ENCODE measurements at regions of chr2 and their contacts with region 1.

Region 1: GRCh38 chr2:233223059-233223894 is 28.2 kb upstream of the ATG16L1 start:
- DNase-seq: peak; percentile 75
- ATAC-seq: peak; percentile 95
- H3K4me3 ChIP-seq: no peak overlapping the region
- H3K27ac ChIP-seq: peak overlapping the region; percentile 66
- H3K4me1 ChIP-seq: peaks cover 28% of the 10 kb centered on the region
- H3K27me3 ChIP-seq: no peaks in the 10 kb centered on the region
- CTCF ChIP-seq: no peak
- EP300 ChIP-seq: peak; percentile 62 to 87; a peak in 3 of 4 replicates
- POLR2A ChIP-seq: no peak
- RAD21 ChIP-seq: no peak

Region 2: DNA sequence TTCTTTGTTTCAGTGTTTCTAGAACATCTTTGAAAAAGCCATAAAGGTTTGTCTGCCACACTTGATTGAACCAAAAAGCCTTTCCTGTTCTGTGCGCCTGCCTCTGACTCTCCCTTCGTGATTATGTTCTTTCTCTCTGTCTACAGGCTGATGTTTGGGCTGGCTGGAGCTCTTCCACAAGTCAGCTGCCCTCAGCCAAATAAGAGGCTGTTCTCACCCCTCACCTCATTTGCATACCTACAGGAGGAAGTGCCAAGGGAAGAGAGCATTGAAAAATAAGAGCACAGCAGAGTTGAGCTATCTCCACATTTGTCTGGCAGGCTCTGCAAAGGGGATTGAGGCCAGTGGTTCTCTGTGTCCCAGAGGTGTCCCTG is 147.3 kb before region 1 on chr2:
- CTCF ChIA-PET with region 1: no interaction called
- POLR2A ChIA-PET with region 1: no interaction called
- RAD21 ChIA-PET with region 1: interaction called, 10 read pairs
- SMC1A ChIA-PET with region 1: interaction called, 5 read pairs
- in situ Hi-C with region 1: no loop called
- intact Hi-C with region 1: no loop called
- DNase-seq: peak; percentile 82
- ATAC-seq: peak; percentile 68
- H3K4me3 ChIP-seq: peak overlapping the region; percentile 30; the same call in 1 of the 2 replicates
- H3K27ac ChIP-seq: peak overlapping the region; percentile 89
- H3K4me1 ChIP-seq: peaks cover 87% of the 10 kb centered on the region
- H3K27me3 ChIP-seq: no peaks in the 10 kb centered on the region
- CTCF ChIP-seq: no peak
- EP300 ChIP-seq: 0 out of 4 replicates have a peak, but pooled peaks of 1 of the 2 experiments have one; percentile 33
- POLR2A ChIP-seq: 0 out of 2 replicates have a peak, but pooled peaks have one; percentile 17
- RAD21 ChIP-seq: no peak

Region 3: GRCh38 chr2:233185963-233186362 is 37.3 kb before region 1 on chr2:
- CTCF ChIA-PET with region 1: interaction called, 3 read pairs
- POLR2A ChIA-PET with region 1: interaction called, 3 read pairs
- RAD21 ChIA-PET with region 1: interaction called, 9 read pairs
- SMC1A ChIA-PET with region 1: interaction called, 18 read pairs
- in situ Hi-C with region 1: no loop called
- intact Hi-C with region 1: no loop called
- DNase-seq: peak; percentile 50
- ATAC-seq: peak; percentile 70
- H3K4me3 ChIP-seq: no peak overlapping the region
- H3K27ac ChIP-seq: peak overlapping the region; percentile 35
- H3K4me1 ChIP-seq: peaks cover 21% of the 10 kb centered on the region
- H3K27me3 ChIP-seq: no peaks in the 10 kb centered on the region
- CTCF ChIP-seq: no peak
- EP300 ChIP-seq: peak in 1 of 2 experiments; percentile 47; a peak in 1 of 4 replicates
- POLR2A ChIP-seq: no peak
- RAD21 ChIP-seq: no peak

Region 4: DNA sequence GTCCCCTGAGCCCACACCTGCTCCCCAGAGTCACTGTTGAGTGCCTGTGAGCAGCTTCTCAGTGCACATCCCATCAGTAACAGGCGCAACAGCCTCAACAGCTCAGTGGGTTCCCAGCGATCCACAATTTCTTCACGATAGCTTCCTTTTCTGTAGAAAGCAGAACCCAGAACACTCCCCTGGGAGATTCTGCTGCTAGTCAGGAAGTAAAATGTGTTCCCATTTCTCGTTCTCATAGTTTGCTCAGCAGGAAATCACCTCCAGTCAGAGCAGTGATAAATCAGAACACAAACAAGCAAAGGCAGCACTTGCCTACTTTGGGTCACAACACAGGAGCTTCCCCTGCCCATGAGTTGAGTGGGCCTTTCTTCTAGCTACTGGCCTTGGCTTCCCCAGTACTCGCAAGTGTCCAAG is 20.7 kb before region 1 on chr2:
- CTCF ChIA-PET with region 1: interaction called, 9 read pairs
- POLR2A ChIA-PET with region 1: interaction called, 16 read pairs
- RAD21 ChIA-PET with region 1: interaction called, 17 read pairs
- SMC1A ChIA-PET with region 1: interaction called, 25 read pairs
- in situ Hi-C with region 1: no loop called
- intact Hi-C with region 1: loop called (anchors 2 kb)
- DNase-seq: peak; percentile 64
- ATAC-seq: peak; percentile 45
- H3K4me3 ChIP-seq: no peak overlapping the region
- H3K27ac ChIP-seq: peak overlapping the region; percentile 78
- H3K4me1 ChIP-seq: peaks cover 28% of the 10 kb centered on the region
- H3K27me3 ChIP-seq: no peaks in the 10 kb centered on the region
- CTCF ChIP-seq: no peak
- EP300 ChIP-seq: no peak
- POLR2A ChIP-seq: no peak; the same call in 1 of the 2 replicates
- RAD21 ChIP-seq: no peak

Region 5: DNA sequence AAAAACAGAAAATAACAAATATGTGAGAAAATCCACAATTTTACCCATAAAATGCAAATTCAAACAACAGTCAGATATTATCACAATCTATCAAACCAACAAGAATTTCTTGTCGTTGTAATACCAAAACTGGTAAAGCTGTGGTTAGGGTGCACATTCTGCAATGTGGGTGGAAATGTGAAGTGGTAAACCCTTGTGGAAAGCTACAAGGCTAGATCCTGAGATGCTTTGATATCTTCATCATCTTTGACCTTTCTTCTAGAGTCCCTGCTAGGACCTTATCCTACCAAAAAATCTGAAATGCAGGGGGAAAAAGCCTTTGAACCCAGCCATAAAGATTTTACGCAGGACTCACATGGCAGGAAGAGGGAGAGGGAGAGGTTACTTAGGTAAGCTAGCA is 11.0 kb after region 1 on chr2:
- CTCF ChIA-PET with region 1: interaction called, 3 read pairs
- POLR2A ChIA-PET with region 1: interaction called, 6 read pairs
- RAD21 ChIA-PET with region 1: interaction called, 11 read pairs
- SMC1A ChIA-PET with region 1: interaction called, 34 read pairs
- in situ Hi-C with region 1: no loop called
- intact Hi-C with region 1: no loop called
- DNase-seq: no peak
- ATAC-seq: peak; percentile 38; the same call in 1 of the 3 replicates
- H3K4me3 ChIP-seq: no peak overlapping the region
- H3K27ac ChIP-seq: no peak overlapping the region
- H3K4me1 ChIP-seq: peaks cover 7% of the 10 kb centered on the region
- H3K27me3 ChIP-seq: no peaks in the 10 kb centered on the region
- CTCF ChIP-seq: no peak
- EP300 ChIP-seq: no peak
- POLR2A ChIP-seq: no peak
- RAD21 ChIP-seq: no peak

Region 6: DNA sequence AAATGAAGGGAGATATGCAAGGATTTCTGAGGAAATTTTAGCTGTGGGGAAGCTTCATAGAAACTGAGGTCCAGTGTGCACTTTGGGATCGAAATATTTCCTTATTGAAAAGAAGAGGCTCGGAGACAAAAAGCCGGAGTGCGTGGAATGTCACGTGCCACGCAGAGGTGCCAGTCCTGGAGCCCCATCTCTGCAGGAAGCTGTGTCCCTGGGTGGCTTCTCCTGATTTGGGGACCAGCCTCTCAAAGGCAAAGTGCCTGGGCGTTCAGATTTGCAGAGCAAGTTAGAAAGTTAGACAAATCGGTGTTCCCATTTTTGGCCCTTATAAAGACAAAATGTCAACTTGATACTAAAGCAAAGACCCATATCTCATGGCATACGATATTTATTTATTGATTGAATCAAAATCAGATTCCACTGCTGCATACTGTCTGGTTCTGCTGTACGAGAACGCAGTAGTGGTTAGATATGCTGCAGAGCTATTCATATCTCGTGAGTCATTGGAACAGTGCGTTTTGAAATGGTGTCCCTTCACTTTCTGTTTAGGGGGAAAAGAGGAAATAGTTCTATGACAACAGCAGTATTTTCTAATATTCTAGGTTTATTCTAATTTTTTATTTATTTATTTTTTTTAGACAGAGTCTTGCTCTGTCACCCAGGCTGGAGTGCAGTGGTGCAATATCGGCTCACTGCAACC is 19.1 kb after region 1 on chr2:
- CTCF ChIA-PET with region 1: interaction called, 7 read pairs
- POLR2A ChIA-PET with region 1: interaction called, 3 read pairs
- RAD21 ChIA-PET with region 1: interaction called, 7 read pairs
- SMC1A ChIA-PET with region 1: interaction called, 11 read pairs
- in situ Hi-C with region 1: no loop called
- intact Hi-C with region 1: no loop called
- DNase-seq: no peak
- ATAC-seq: peak; percentile 32; the same call in 1 of the 3 replicates
- H3K4me3 ChIP-seq: no peak overlapping the region
- H3K27ac ChIP-seq: no peak overlapping the region
- H3K4me1 ChIP-seq: peaks cover 19% of the 10 kb centered on the region
- H3K27me3 ChIP-seq: no peaks in the 10 kb centered on the region
- CTCF ChIP-seq: no peak
- EP300 ChIP-seq: no peak
- POLR2A ChIP-seq: no peak
- RAD21 ChIP-seq: no peak